ENCODE measurements at regions of chr6 and their contacts with region 1.

Region 1: GRCh38 chr6:89139509-89140346 is 6.1 kb upstream of the PM20D2 start:
- DNase-seq: no peak
- H3K4me3 ChIP-seq: no peak overlapping the region
- H3K27ac ChIP-seq: peak overlapping the region in 3 of 4 donors; percentile 38 to 75 (median 70)
- H3K4me1 ChIP-seq: peaks cover 0 to 24% (median 22%) of the 10 kb centered on the region in 4 donors
- H3K27me3 ChIP-seq: no peaks in the 10 kb centered on the region
- CTCF ChIP-seq: no peak
- EP300 ChIP-seq: no peak
- POLR2A ChIP-seq: no peak

Region 2: GRCh38 chr6:89172131-89172530 is 32.4 kb after region 1 on chr6:
- intact Hi-C with region 1: loop called (anchors 5 kb)
- DNase-seq: no peak
- H3K4me3 ChIP-seq: no peak overlapping the region
- H3K27ac ChIP-seq: no peak overlapping the region
- H3K4me1 ChIP-seq: peaks cover 0 to 17% (median 0%) of the 10 kb centered on the region in 4 donors
- H3K27me3 ChIP-seq: no peaks in the 10 kb centered on the region
- CTCF ChIP-seq: no peak
- EP300 ChIP-seq: no peak
- POLR2A ChIP-seq: no peak